Activated T-helper 2 cell treated with anti-CD3 and anti-CD28 coated beads, Interferon-gamma antibody, Interleukin-2, Interleukin-4, amounts not matched to agents 10 μg/mL and 5 μg/mL and 100 μg/mL, durations not matched to agents 14 hours and 24 hours and 36 hours (primary cell): ENCODE measurements at regions of chr14 and their contacts with region 1.

Region 1: DNA sequence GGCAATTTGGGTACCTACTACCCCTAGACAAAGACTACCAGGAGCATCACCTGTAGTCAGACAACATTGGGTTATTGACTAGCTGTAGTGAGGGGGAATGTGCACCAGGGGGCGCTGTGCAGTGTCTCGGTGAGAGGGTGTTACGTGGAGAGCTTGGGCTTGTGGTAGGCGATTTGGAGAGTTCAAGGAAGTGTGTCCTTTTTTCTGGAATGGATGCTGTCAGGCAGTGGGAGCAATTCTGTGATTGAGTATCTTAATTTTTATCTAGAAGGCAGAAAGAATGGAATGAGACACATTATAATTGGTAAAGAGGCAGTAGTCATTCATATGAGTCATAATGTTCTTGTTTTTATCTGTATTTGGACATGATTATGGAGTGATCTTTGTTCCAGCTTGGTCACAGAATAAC is 187.7 kb downstream of the GALC start:
- DNase-seq: peak; percentile 17
- H3K4me3 Mint-ChIP-seq: no peak overlapping the region
- H3K27ac Mint-ChIP-seq: no peak overlapping the region
- H3K4me1 Mint-ChIP-seq: no peaks in the 10 kb centered on the region
- H3K27me3 Mint-ChIP-seq: no peaks in the 10 kb centered on the region

Region 2: GRCh38 chr14:87896393-87897380 is 91.4 kb after region 1 on chr14:
- intact Hi-C with region 1: loop called (anchors 1 kb)
- DNase-seq: no peak
- H3K4me3 Mint-ChIP-seq: no peak overlapping the region
- H3K27ac Mint-ChIP-seq: no peak overlapping the region
- H3K4me1 Mint-ChIP-seq: no peaks in the 10 kb centered on the region
- H3K27me3 Mint-ChIP-seq: peaks cover 27% of the 10 kb centered on the region

Region 3: DNA sequence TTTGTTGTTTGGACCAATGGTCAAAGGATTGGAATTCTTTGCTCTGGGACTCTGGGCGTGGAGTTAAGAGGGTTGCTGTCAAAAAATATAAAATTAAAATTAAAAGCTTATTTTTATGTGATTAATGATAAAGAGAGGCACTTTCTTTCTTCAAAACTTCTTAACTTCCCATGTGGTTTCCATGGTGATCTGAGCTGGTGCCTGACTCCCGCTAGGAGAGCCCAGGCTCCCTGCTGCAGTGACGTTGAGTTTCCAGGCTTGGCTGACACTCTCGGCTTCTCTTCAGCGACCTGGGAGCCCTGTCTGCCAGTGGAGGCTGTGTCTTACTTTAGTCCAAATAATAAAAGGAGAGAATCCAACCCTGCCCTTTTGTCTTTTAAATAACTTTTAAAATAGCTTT is 103.2 kb after region 1 on chr14:
- intact Hi-C with region 1: no loop called
- DNase-seq: no peak
- H3K4me3 Mint-ChIP-seq: no peak overlapping the region
- H3K27ac Mint-ChIP-seq: no peak overlapping the region
- H3K4me1 Mint-ChIP-seq: no peaks in the 10 kb centered on the region
- H3K27me3 Mint-ChIP-seq: peaks cover 1% of the 10 kb centered on the region